ENCODE measurements at regions of chr20 and their contacts with region 1.

Region 1: DNA sequence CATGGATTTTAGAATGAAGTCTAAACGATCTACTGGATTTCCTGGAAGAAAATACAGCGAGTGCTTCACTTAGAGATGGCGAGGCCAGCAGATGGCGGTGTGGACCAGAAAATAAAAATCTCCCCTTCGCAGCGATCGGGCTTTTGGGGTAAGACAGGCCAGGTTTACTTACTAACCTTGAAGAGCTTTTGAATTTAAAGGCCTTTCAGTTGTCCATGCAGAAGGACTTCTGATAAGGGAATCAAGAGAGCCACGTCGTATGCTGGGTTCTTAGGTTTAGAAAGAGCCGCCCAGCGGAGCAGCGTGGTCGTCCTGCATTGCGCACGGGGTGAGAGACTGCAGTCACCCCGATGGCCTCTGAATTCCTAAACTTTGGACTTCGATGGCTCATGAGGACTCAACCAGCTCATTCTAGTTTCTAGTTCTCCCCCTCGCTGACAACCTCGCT is 125.2 kb upstream of the RALGAPA2 start:
- H3K4me3 Mint-ChIP-seq: no peak overlapping the region
- H3K27ac Mint-ChIP-seq: no peak overlapping the region
- H3K4me1 Mint-ChIP-seq: no peaks in the 10 kb centered on the region
- H3K27me3 Mint-ChIP-seq: peaks cover 22% of the 10 kb centered on the region

Region 2: DNA sequence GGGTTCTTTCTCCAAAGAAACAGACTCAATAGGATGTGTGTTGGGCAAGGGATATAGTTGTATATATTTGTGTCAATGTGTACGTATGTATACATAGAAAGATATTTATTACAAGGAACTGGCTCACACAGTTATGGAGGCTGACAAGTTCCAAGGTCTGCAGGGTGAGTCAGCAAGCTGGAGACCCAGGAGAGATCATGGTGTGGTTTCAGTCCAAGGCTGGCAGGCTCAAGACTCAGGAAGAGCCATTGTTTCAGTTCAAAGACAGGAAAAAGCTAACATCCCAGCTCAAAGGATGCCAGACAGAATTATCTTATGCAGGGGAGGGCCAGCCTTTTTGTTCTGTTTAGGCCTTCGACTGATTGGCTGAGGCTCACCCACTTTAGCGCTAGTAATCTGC is 35.3 kb before region 1 on chr20:
- intact Hi-C with region 1: no loop called
- H3K4me3 Mint-ChIP-seq: no peak overlapping the region
- H3K27ac Mint-ChIP-seq: no peak overlapping the region
- H3K4me1 Mint-ChIP-seq: peaks cover 10% of the 10 kb centered on the region
- H3K27me3 Mint-ChIP-seq: peaks cover 3% of the 10 kb centered on the region

Region 3: DNA sequence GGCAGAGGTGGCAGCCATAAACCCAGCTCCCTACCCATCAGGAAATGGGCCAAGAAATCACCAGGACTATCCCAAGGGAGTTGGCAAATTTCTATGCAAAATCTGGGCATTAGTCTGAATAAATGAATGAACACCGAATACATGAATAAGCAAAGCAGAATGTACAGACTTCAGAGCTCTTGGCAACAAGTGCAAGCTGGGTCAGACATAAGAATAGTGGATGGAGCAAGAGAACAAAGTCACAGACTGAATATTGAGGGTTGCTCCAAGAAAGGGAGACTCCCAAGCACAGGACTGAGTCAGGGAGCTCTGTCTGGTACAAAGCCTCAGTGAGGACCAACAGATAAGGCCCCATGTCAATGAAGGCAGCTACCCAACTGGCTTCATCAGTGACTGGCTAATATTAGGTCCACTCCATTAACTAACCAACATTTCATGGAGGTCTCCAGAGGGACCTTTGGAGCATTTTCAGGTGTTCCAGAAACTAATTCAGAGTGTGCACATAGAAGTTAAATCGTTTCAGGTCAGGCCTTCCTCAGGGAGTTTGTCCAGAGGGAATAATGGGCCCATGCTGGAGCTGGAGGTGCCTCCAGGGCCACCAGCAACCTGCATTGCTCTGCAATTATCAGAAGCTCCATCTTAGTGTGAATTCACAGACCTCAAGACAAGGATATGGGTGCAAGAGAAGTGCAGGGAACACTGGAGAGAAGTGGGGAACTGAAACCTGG is 66.3 kb after region 1 on chr20:
- intact Hi-C with region 1: no loop called
- H3K4me3 Mint-ChIP-seq: no peak overlapping the region
- H3K27ac Mint-ChIP-seq: no peak overlapping the region
- H3K4me1 Mint-ChIP-seq: no peaks in the 10 kb centered on the region
- H3K27me3 Mint-ChIP-seq: peaks cover 17% of the 10 kb centered on the region

Region 4: GRCh38 chr20:21615617-21616080 is 778.1 kb after region 1 on chr20:
- intact Hi-C with region 1: loop called (anchors 5 kb)
- H3K4me3 Mint-ChIP-seq: no peak overlapping the region
- H3K27ac Mint-ChIP-seq: no peak overlapping the region
- H3K4me1 Mint-ChIP-seq: no peaks in the 10 kb centered on the region
- H3K27me3 Mint-ChIP-seq: peaks cover 10% of the 10 kb centered on the region

Measured in dendritic cell treated with granulocyte-macrophage colony-stimulating factor and Interleukin-4, amounts not matched to agents 40 ng/mL and 50 ng/mL, for 4 days (primary cell).